AG04449 (cell line): ENCODE measurements at regions of chr19 and their contacts with region 1.

Region 1: DNA sequence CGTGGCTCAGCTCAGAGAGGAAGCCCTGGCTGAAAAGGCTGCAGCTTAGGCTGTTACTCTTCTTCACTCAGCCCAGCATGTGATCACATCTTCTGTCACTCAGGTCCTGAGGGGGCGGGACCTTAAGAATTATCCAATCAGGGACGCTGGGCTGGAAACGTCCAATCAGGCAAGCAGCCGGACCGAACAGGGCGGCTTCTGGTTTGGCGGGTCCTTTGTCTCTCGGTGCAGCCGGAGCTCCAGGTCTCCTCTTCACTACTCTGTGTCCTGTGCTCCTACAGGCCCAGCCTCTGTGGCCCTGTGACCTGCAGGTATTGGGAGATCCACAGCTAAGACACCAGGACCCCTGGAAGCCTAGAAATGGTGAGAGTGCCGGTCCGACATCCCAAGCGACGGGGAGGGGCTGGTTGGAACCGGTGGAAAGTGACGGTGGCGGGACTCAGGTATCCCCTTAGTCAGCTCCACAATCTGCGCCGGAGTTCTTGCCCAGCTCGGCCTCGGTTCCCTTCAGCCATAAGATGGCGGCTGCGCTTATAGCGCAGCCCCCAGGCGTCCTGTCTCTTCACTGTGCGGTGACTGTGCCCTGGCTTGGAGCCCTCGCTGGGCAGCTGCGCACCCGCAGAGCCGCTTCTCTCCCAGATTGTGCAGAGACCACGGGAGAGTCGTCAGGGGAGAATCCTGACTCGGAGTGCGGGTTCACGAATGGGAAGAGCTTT is at the start of gene ZNF93:
- DNase-seq: peak; percentile 83
- H3K4me3 ChIP-seq: peak within 1 kb of the TSS; percentile 79
- CTCF ChIP-seq: no peak

Region 2: GRCh38 chr19:19606021-19606420 is 294.9 kb before region 1 on chr19:
- CTCF ChIA-PET with region 1: no interaction called
- POLR2A ChIA-PET with region 1: no interaction called
- DNase-seq: no peak
- H3K4me3 ChIP-seq: no peak overlapping the region
- CTCF ChIP-seq: no peak

Region 3: DNA sequence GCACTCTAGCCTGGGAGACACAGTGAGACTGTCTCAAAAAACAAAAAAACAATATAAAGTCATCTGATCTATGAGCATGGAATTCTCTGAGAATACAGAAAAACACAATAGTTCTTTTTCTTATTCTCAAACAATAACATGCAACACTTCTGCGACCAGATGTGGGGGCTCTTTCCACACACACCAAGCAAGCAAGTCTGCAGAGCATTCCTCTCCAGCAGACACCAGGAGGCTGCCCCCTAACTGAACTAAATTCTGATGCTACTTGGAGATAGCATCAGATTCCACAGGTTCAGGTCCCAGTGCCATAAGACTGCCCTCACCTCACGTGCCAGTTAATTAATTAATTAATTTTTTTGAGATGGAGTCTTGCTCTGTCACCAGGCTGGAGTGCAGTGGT is 204.5 kb before region 1 on chr19:
- CTCF ChIA-PET with region 1: no interaction called
- POLR2A ChIA-PET with region 1: no interaction called
- DNase-seq: no peak
- H3K4me3 ChIP-seq: no peak overlapping the region
- CTCF ChIP-seq: no peak

Region 4: DNA sequence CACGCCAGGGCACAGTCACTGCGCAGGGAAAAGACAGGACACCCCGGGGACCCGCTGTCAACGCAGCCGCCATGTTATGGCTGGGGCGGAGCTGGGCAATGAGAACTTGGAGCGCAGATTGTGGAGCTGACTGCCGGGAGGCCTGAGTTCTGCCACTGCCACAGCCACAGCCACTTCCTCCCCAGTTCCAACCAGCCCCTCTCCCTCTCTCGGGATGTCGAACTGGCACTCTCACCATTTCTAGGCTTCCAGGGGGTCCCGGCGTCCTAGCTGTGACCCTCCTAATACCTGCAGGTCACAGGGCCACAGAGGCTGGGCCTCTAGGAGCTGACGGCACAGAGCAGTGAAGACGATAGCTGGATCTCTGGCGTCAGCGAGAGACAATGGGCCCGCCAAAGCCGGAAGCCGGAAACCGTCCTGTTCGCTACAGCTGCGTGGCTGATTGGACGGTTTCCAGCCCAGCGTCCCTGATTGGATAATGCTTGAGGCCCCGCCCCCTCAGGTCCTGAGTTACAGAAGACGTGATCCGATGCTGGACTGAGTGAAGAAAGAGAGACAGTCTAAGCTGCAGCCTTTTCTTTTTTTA is 79.4 kb before region 1 on chr19 and contains the start of gene ZNF506:
- CTCF ChIA-PET with region 1: no interaction called
- POLR2A ChIA-PET with region 1: interaction called, 11 read pairs
- DNase-seq: peak; percentile 67
- H3K4me3 ChIP-seq: peak within 1 kb of the TSS; percentile 86
- CTCF ChIP-seq: no peak

Region 5: DNA sequence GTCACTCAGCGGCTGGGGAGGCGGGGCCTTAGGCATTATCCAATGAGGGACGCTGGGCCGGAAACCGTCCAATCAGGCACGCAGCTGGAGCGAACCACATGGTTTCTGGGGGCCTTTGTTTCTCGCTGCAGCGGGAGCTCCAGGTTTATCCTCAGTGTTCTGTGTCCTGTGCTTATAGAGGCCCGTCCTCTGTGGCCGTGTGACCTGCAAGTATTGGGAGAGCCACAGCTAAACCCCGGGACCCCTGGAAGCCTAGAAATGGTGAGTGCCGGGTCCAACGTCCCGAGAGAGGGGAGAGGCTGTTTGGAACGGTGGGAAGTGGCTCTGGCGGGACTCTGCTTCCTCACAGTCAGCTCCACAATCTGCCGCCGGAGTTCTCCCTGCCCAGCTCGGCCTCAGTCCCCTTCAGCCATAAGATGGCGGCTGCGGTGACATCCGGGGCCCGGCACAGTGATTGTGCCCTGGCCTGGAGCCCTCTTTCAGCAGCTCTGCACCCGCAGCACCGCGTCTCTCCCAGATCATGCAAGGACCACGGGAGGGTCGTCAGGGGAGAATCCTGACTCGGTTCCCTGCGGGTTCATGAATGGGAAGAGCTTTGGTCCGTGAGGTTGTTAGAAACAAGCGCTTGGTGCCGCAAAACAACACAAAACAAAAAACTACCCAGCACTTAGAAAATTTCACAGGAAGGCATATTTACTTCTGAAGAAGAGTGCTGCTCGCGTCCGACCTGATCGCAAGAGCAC is 35.0 kb before region 1 on chr19 and contains the start of gene ZNF253:
- CTCF ChIA-PET with region 1: no interaction called
- POLR2A ChIA-PET with region 1: interaction called, 22 read pairs
- DNase-seq: peak; percentile 42
- H3K4me3 ChIP-seq: peak within 1 kb of the TSS; percentile 66
- CTCF ChIP-seq: no peak